ENCODE measurements at regions of chr1 and their contacts with region 1.

Region 1: GRCh38 chr1:229661022-229661877 is 35.2 kb downstream of the URB2 start:
- DNase-seq: peak; percentile 60 to 80
- H3K4me3 ChIP-seq: no peak overlapping the region
- H3K27ac ChIP-seq: no peak overlapping the region
- H3K4me1 ChIP-seq: no peaks in the 10 kb centered on the region
- H3K27me3 ChIP-seq: no peaks in the 10 kb centered on the region
- CTCF ChIP-seq: peak; percentile 65 to 87 (median 82)
- POLR2A ChIP-seq: no peak

Region 2: GRCh38 chr1:230310381-230311163 is 649.3 kb after region 1 on chr1:
- intact Hi-C with region 1: loop called (anchors 10 kb)
- DNase-seq: peak; percentile 48 to 73
- H3K4me3 ChIP-seq: no peak overlapping the region
- H3K27ac ChIP-seq: no peak overlapping the region
- H3K4me1 ChIP-seq: peaks cover 0 to 4% of the 10 kb centered on the region in 2 donors
- H3K27me3 ChIP-seq: no peaks in the 10 kb centered on the region
- CTCF ChIP-seq: peak; percentile 83 to 89 (median 85)
- POLR2A ChIP-seq: no peak

Measured in breast epithelium (tissue), 4 donors.